Adrenal gland (tissue), 19 donors: ENCODE measurements at regions of chr1 and their contacts with region 1.

Region 1: GRCh38 chr1:31054349-31054748 is 11.2 kb downstream of the PUM1 start:
- DNase-seq: peak in 1 of 7 donors; percentile 33
- H3K4me3 ChIP-seq: no peak overlapping the region
- H3K27ac ChIP-seq: peak overlapping the region in 3 of 5 donors; percentile 60 to 74 (median 61)
- H3K4me1 ChIP-seq: peaks cover 26 to 62% of the 10 kb centered on the region in 2 donors
- H3K27me3 ChIP-seq: no peaks in the 10 kb centered on the region
- CTCF ChIP-seq: no peak
- POLR2A ChIP-seq: no peak

Region 2: DNA sequence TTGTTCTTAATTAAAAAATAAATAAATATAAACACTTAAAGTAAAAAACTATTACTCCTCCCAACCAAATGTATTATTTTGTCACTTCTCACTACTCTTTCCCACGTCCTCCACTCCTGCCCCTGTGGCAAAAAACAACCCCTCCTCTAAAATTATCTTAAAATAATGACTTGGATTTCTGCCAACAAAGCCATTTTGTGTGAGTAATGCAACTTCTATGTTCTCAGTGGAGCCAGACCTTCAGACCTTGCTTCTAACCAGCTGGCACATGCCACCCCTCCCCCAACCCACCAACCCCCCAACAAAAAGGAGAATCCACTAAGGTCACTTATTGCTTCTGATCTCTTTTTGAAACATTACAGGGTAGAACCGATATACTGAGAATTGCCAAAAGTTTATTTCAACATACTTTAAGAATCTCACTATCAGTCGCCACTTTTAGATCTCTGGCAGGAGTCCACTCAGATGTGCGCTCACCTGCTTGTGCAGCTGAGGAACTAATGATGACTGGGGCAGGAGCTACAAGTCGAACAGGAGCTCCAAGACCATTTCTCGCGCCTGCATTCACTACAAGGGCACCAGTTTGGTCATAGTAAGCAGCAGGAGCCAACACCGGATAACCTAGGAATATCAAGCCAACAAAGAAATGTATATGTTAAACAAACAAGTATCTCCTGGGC is 87.5 kb before region 1 on chr1:
- intact Hi-C with region 1: loop called in 1 of 2 experiments (anchors 10 kb)
- DNase-seq: peak; percentile 46 to 85 (median 78)
- H3K4me3 ChIP-seq: no peak overlapping the region
- H3K27ac ChIP-seq: peak overlapping the region in 4 of 5 donors; percentile 2 to 80 (median 51)
- H3K4me1 ChIP-seq: peaks cover 23 to 58% of the 10 kb centered on the region in 2 donors
- H3K27me3 ChIP-seq: no peaks in the 10 kb centered on the region
- CTCF ChIP-seq: no peak
- POLR2A ChIP-seq: no peak

Region 3: DNA sequence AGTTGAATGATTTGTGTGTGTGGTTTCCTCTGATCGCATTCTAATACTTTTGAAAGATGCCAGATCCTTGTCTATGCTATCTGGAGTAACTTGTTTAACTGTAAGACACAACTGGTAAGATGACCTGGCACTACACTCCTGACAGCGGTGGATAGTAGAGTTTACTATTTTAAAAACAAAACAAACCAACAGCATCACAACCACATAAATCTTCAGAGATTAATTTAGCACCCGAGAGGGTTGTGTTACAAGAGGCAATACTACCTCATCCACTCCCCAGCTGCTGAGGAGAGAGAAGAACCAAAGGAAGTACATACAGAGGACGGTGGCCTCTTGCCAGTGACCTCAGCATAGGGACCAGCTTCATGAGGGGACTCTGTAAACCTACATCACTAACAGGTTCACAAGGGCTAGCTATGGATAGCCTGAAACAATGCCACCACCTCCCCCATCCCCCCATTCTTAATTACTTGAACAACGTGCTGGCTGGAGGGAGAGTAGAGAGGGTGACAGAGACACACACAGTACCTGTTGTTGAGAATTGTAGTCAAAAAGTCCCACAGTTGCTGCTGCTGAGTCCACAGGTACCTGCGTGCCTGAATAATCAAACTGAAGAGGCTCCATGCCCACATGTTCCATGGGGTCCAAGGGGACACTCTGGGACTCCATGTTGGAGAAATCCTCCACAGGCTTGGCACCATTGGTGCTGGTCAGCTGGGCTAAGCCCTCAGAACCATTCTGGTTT is 62.3 kb before region 1 on chr1:
- intact Hi-C with region 1: loop called in 1 of 2 experiments (anchors 10 kb)
- DNase-seq: no peak
- H3K4me3 ChIP-seq: no peak overlapping the region
- H3K27ac ChIP-seq: no peak overlapping the region
- H3K4me1 ChIP-seq: peaks cover 21 to 39% of the 10 kb centered on the region in 2 donors
- H3K27me3 ChIP-seq: no peaks in the 10 kb centered on the region
- CTCF ChIP-seq: no peak
- POLR2A ChIP-seq: no peak